ENCODE measurements at regions of chr17 and their contacts with region 1.

Region 1: GRCh38 chr17:72985881-72986720 is 106.4 kb downstream of the SLC39A11 start:
- DNase-seq: peak; percentile 69
- ATAC-seq: peak; percentile 81
- H3K4me3 Mint-ChIP-seq: no peak overlapping the region
- H3K27ac Mint-ChIP-seq: no peak overlapping the region
- H3K4me1 Mint-ChIP-seq: no peaks in the 10 kb centered on the region
- H3K27me3 Mint-ChIP-seq: no peaks in the 10 kb centered on the region

Region 2: GRCh38 chr17:73000832-73001231 is 14.7 kb after region 1 on chr17:
- CTCF ChIA-PET with region 1: interaction called, 14 read pairs
- POLR2A ChIA-PET with region 1: no interaction called
- DNase-seq: no peak
- ATAC-seq: no peak
- H3K4me3 Mint-ChIP-seq: no peak overlapping the region
- H3K27ac Mint-ChIP-seq: no peak overlapping the region
- H3K4me1 Mint-ChIP-seq: no peaks in the 10 kb centered on the region
- H3K27me3 Mint-ChIP-seq: no peaks in the 10 kb centered on the region

Region 3: DNA sequence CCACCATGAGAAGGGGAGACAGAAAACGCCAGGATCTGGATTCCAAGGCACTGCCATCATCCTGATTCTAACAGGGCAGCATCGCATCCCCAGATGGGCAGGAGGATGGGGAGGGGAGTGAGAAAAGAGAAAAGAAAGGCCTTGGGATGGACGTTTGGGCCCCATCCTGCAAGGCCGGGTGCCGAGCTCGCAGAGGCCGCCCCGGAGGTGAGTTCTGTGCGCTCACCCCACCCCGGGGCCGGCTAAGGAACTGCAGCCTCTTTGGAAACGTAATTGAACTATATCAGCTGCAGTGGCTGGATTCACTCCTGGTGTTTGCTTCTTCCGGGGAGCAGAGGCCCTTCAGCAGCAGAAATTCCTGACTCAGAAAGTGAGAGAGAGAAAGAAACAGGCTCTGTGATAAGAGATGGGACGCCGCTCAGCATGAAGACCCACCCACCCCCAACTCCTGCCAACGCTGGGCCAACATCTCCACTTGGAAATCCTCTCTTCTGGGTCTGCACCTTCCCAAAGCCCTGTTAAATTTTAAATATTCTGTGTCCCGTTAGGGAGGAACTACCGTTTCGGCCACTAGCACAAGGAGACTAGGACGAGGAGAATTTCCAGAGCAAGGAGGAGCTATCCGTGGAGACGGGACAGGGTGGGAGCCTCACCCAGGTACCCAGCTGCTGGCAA is 170.2 kb after region 1 on chr17:
- CTCF ChIA-PET with region 1: interaction called, 20 read pairs
- POLR2A ChIA-PET with region 1: no interaction called
- DNase-seq: peak; percentile 70
- ATAC-seq: peak; percentile 95
- H3K4me3 Mint-ChIP-seq: no peak overlapping the region
- H3K27ac Mint-ChIP-seq: no peak overlapping the region
- H3K4me1 Mint-ChIP-seq: no peaks in the 10 kb centered on the region
- H3K27me3 Mint-ChIP-seq: peaks cover 20% of the 10 kb centered on the region

Measured in activated CD8-positive, alpha-beta T cell treated with anti-CD3 and anti-CD28 coated beads, Interleukin-2, amount 10 ng/mL, durations not matched to agents 7 days and 5 days (primary cell).